ENCODE measurements at regions of chrX and their contacts with region 1.

Region 1: DNA sequence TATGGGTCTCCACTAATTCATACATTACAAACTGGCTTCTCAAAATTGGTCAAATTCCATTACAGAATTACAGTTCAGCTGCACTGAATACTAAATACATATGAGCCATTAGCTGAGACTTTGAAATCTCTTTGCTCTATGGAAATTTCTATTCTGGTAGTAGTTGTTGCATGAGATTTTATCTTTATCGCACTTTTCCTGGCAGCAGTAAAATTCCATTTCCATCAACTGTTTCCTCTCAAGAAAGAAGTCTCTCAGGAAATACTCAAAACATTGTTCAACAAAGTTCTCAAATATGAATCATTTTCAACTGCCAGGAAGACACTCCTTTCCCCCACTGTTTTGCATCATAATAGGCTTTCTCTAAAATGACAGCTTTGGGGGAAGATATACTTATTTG is 51.3 kb downstream of the ATP11C start:
- DNase-seq: peak; percentile 46
- ATAC-seq: peak; percentile 33
- H3K4me3 ChIP-seq: no peak overlapping the region
- H3K27ac ChIP-seq: no peak overlapping the region; the same call in 1 of the 2 replicates
- H3K4me1 ChIP-seq: peaks cover 16% of the 10 kb centered on the region
- H3K27me3 ChIP-seq: no peaks in the 10 kb centered on the region
- CTCF ChIP-seq: no peak
- POLR2A ChIP-seq: no peak
- RAD21 ChIP-seq: no peak

Region 2: GRCh38 chrX:139831675-139832456 is 49.7 kb before region 1 on chrX:
- CTCF ChIA-PET with region 1: no interaction called
- POLR2A ChIA-PET with region 1: no interaction called
- dilution Hi-C with region 1: no loop called
- in situ Hi-C with region 1: no loop called
- intact Hi-C with region 1: loop called (anchors 2 kb)
- DNase-seq: peak; percentile 70
- ATAC-seq: peak; percentile 78
- H3K4me3 ChIP-seq: no peak overlapping the region
- H3K27ac ChIP-seq: no peak overlapping the region
- H3K4me1 ChIP-seq: peaks cover 7% of the 10 kb centered on the region
- H3K27me3 ChIP-seq: no peaks in the 10 kb centered on the region
- CTCF ChIP-seq: no peak
- POLR2A ChIP-seq: no peak
- RAD21 ChIP-seq: no peak

Region 3: DNA sequence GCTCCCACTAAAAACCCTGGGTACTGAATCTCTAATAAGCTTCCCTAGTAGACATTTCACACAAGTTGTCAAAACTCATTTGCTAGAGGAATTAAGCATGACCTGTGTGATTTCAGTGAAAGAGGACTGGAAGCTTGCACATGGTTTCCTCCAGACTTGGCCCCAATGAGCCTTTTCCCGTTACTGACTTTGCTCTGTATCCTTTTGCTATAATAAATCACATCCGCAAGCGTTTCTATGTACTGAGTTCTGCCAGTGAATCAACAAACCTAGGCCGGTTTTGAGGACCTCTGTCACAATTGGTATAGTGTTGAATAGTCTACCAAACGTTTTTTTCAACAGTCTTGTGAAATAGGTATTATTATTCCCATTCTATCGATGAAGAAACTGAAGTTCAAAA is 43.1 kb after region 1 on chrX:
- CTCF ChIA-PET with region 1: no interaction called
- POLR2A ChIA-PET with region 1: no interaction called
- dilution Hi-C with region 1: no loop called
- in situ Hi-C with region 1: no loop called
- intact Hi-C with region 1: loop called (anchors 5 kb)
- DNase-seq: no peak
- ATAC-seq: no peak
- H3K4me3 ChIP-seq: no peak overlapping the region
- H3K27ac ChIP-seq: no peak overlapping the region
- H3K4me1 ChIP-seq: no peaks in the 10 kb centered on the region; the same call in 1 of the 2 replicates
- H3K27me3 ChIP-seq: no peaks in the 10 kb centered on the region
- CTCF ChIP-seq: no peak
- POLR2A ChIP-seq: no peak
- RAD21 ChIP-seq: no peak

Measured in IMR-90 (cell line).